Panc1 (cell line): ENCODE measurements at regions of chr17 and their contacts with region 1.

Region 1: DNA sequence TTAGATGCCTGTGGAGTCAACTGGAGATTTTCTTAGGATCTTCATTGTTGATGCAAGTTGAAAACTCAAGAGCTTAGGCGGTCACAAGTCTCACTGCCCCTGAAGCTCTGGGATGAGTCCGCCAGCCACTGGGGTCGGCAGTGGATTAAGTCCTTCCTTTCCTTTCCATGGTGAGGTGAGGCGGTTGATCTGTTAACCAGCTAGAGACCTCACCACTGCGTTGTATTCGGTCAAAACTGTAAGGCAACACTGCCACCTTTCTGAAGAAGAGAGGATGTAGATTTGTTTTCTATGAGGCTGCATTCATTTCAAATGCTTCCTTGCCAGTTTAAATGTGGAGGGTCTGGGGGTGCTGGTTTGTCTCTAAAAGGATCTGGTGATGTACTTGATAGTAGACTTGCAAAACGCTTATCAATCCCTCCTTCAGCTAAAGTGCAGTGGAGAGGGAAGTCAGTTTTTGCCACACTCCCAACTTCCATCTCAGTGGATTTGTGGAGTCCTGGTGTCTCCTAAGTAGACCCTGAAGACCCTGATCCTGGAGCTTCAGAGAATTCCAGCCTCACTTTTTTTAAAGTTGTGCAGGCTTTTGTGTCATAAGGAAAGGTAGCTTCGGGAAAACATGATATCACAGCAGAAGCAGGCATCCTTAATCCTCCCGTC is 1.7 kb downstream of the MYOCD start:
- DNase-seq: peak; percentile 13
- ATAC-seq: peak; percentile 71; the same call in 1 of the 2 replicates
- H3K4me3 ChIP-seq: no peak overlapping the region
- H3K27ac ChIP-seq: no peak overlapping the region
- H3K4me1 ChIP-seq: no peaks in the 10 kb centered on the region; the same call in none of the 2 replicates
- H3K27me3 ChIP-seq: peaks cover 13% of the 10 kb centered on the region
- CTCF ChIP-seq: peak; percentile 53

Region 2: GRCh38 chr17:12180644-12181261 is 486.7 kb before region 1 on chr17:
- CTCF ChIA-PET with region 1: interaction called, 3 read pairs
- POLR2A ChIA-PET with region 1: no interaction called
- in situ Hi-C with region 1: no loop called
- intact Hi-C with region 1: loop called (anchors 2 kb)
- DNase-seq: peak; percentile 24
- ATAC-seq: no peak
- H3K4me3 ChIP-seq: no peak overlapping the region
- H3K27ac ChIP-seq: no peak overlapping the region
- H3K4me1 ChIP-seq: no peaks in the 10 kb centered on the region
- H3K27me3 ChIP-seq: no peaks in the 10 kb centered on the region
- CTCF ChIP-seq: peak; percentile 73; the same call in 1 of the 2 replicates

Region 3: DNA sequence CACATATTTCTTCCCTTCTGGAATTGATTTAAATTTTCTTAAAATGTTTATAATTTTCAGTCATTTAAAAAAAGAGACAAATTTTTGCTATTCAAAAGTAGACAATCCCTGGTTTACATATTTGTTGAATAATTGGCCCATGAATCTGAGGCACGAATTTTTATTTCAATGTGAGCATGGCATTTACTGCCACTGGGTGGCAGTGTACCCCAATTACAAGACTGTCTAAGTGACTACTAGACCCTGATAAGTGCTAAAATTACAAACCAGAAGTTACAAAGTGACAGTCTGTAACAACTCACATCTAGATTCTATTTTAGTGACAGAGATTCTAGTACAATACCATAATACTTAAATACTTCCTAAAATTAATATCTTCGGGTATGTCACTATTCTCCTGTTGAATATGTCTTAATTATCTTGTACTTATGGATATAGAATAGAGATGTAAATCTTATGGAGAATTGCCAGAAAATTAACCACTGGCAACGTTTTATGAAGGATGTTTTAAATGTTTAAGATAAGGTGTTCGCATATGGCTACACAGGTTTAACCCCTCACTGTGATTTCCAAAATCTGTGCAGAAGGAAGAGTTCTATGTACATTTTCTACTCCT is 410.9 kb before region 1 on chr17:
- CTCF ChIA-PET with region 1: no interaction called
- POLR2A ChIA-PET with region 1: no interaction called
- in situ Hi-C with region 1: no loop called
- intact Hi-C with region 1: loop called (anchors 1 kb)
- DNase-seq: peak; percentile 32
- ATAC-seq: no peak
- H3K4me3 ChIP-seq: no peak overlapping the region
- H3K27ac ChIP-seq: no peak overlapping the region
- H3K4me1 ChIP-seq: no peaks in the 10 kb centered on the region
- H3K27me3 ChIP-seq: peaks cover 2% of the 10 kb centered on the region; the same call in 1 of the 2 replicates
- CTCF ChIP-seq: peak; percentile 71; the same call in 1 of the 2 replicates

Region 4: GRCh38 chr17:12536472-12536871 is 131.0 kb before region 1 on chr17:
- CTCF ChIA-PET with region 1: no interaction called
- POLR2A ChIA-PET with region 1: no interaction called
- in situ Hi-C with region 1: no loop called
- intact Hi-C with region 1: loop called (anchors 10 kb)
- DNase-seq: no peak
- ATAC-seq: no peak
- H3K4me3 ChIP-seq: no peak overlapping the region
- H3K27ac ChIP-seq: no peak overlapping the region
- H3K4me1 ChIP-seq: no peaks in the 10 kb centered on the region
- H3K27me3 ChIP-seq: no peaks in the 10 kb centered on the region
- CTCF ChIP-seq: no peak

Region 5: DNA sequence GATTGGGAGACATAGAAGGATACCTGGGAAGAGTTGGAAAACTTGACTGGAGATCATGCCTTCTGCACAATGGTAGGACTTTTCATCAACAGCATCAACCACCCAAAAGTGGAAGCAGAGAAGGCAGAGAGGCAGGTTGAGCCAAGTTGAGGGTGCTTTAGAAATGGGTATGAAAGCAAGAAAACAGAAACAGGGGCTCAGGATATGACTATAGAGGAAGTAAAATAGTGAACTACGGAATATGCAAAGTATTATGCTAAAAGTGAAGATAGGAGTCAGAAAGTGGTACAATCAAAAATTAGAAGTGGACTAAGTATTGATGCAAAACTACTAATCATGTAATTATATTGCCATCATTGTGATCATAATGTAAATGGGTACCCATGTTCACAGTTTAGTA is 105.7 kb after region 1 on chr17:
- CTCF ChIA-PET with region 1: no interaction called
- POLR2A ChIA-PET with region 1: no interaction called
- in situ Hi-C with region 1: no loop called
- intact Hi-C with region 1: no loop called
- DNase-seq: no peak
- ATAC-seq: no peak
- H3K4me3 ChIP-seq: no peak overlapping the region
- H3K27ac ChIP-seq: no peak overlapping the region
- H3K4me1 ChIP-seq: no peaks in the 10 kb centered on the region
- H3K27me3 ChIP-seq: no peaks in the 10 kb centered on the region; the same call in 1 of the 2 replicates
- CTCF ChIP-seq: no peak